ENCODE measurements at regions of chr17 and their contacts with region 1.

Region 1: DNA sequence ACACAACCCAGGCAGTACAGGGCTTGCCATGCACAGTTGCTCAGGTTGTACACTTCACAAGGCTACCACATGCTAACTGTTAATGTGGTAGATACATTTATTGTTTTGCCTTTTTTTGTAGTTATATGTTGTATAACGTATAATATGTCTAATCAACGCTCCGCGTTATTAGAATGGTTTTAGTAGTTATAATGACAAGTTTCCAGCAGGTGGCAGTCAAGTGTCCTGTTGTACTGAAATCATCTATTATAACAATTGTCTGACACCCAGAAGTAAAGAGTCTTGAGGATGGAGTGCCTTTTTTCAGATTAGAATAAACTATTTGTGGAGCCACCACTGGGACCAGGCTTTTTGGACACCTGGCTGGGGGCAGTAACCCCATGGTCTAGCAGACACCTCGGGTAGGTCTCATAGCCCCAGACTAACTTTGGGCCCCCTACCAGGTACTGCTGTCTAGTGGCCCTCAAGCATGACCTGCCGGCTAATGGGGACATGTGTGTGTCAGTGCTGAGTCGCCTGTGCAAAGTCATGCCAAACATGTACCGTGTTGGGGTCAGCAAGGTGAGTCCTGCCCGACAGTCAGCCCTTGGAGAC is 32.8 kb downstream of the MYO15A start:
- DNase-seq: peak; percentile 64 to 65
- ATAC-seq: peak; percentile 43 to 65; a peak in 4 of 6 replicates
- H3K4me3 ChIP-seq: no peak overlapping the region
- H3K27ac ChIP-seq: no peak overlapping the region
- H3K4me1 ChIP-seq: no peaks in the 10 kb centered on the region
- CTCF ChIP-seq: peak; percentile 79
- EP300 ChIP-seq: no peak
- POLR2A ChIP-seq: no peak
- RAD21 ChIP-seq: peak; percentile 48 to 63; a peak in 3 of 5 replicates

Region 2: DNA sequence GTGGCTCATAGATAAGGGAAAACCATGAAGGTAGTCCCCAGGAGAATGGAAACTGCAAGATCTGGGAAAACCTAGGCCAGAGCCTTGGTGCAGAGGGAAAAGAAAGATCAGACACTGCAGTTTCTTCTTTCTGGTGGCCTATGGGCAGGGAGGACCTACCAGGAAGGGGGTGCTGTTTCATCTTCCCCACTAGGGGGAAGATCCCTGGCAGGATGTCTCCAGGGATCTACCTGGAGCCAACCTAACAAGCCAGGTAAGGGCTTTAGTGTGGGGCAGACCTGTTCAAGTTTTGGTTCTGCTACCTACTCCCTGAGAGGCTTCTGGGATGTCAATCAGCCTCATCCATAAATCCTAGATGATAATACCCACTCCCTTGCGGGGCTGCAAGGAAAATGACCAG is 190.5 kb before region 1 on chr17:
- CTCF ChIA-PET with region 1: no interaction called
- POLR2A ChIA-PET with region 1: no interaction called
- DNase-seq: peak in 1 of 2 experiments; percentile 54
- ATAC-seq: peak in 1 of 2 experiments; percentile 80; a peak in 4 of 6 replicates
- H3K4me3 ChIP-seq: no peak overlapping the region
- H3K27ac ChIP-seq: peak overlapping the region in 1 of 2 experiments; percentile 32; a peak in 2 of 6 replicates
- H3K4me1 ChIP-seq: peaks cover 28% of the 10 kb centered on the region
- CTCF ChIP-seq: no peak
- EP300 ChIP-seq: no peak
- POLR2A ChIP-seq: no peak
- RAD21 ChIP-seq: peak in 1 of 2 experiments; percentile 18; a peak in 1 of 5 replicates

Region 3: GRCh38 chr17:18108401-18109312 is 32.6 kb before region 1 on chr17 and contains the start of gene MYO15A:
- CTCF ChIA-PET with region 1: interaction called, 11 read pairs
- POLR2A ChIA-PET with region 1: no interaction called
- DNase-seq: no peak
- ATAC-seq: peak in 1 of 2 experiments; percentile 2; a peak in 2 of 6 replicates
- H3K4me3 ChIP-seq: no peak within 1 kb of the TSS
- H3K27ac ChIP-seq: no peak within 1 kb of the TSS
- H3K4me1 ChIP-seq: no peaks in the 10 kb centered on the region
- CTCF ChIP-seq: no peak
- EP300 ChIP-seq: no peak
- POLR2A ChIP-seq: no peak
- RAD21 ChIP-seq: no peak
- polyA plus RNA-seq, gene MYO15A: 0.22 and 0.24 TPM in 2 replicates

Region 4: GRCh38 chr17:18153749-18154161 is 12.4 kb after region 1 on chr17:
- CTCF ChIA-PET with region 1: interaction called, 67 read pairs
- POLR2A ChIA-PET with region 1: no interaction called
- DNase-seq: peak in 1 of 2 experiments; percentile 40
- ATAC-seq: peak in 1 of 2 experiments; percentile 62; a peak in 3 of 6 replicates
- H3K4me3 ChIP-seq: no peak overlapping the region
- H3K27ac ChIP-seq: no peak overlapping the region
- H3K4me1 ChIP-seq: peaks cover 3% of the 10 kb centered on the region; the same call in 1 of the 3 replicates
- CTCF ChIP-seq: no peak
- EP300 ChIP-seq: no peak
- POLR2A ChIP-seq: no peak
- RAD21 ChIP-seq: no peak

Region 5: GRCh38 chr17:18183334-18184142 is 42.2 kb after region 1 on chr17 and contains the start of gene ALKBH5:
- CTCF ChIA-PET with region 1: interaction called, 40 read pairs
- POLR2A ChIA-PET with region 1: interaction called, 4 read pairs
- DNase-seq: peak; percentile 100
- ATAC-seq: peak; percentile 86 to 93
- H3K4me3 ChIP-seq: peak within 1 kb of the TSS; percentile 73
- H3K27ac ChIP-seq: peak within 1 kb of the TSS; percentile 93 to 96
- H3K4me1 ChIP-seq: peaks cover 43% of the 10 kb centered on the region
- CTCF ChIP-seq: 0 out of 3 replicates have a peak, but pooled peaks have one; percentile 11
- EP300 ChIP-seq: no peak
- POLR2A ChIP-seq: peak; percentile 72
- RAD21 ChIP-seq: no peak
- polyA plus RNA-seq, gene ALKBH5: 99.2 and 105 TPM in 2 replicates

Region 6: DNA sequence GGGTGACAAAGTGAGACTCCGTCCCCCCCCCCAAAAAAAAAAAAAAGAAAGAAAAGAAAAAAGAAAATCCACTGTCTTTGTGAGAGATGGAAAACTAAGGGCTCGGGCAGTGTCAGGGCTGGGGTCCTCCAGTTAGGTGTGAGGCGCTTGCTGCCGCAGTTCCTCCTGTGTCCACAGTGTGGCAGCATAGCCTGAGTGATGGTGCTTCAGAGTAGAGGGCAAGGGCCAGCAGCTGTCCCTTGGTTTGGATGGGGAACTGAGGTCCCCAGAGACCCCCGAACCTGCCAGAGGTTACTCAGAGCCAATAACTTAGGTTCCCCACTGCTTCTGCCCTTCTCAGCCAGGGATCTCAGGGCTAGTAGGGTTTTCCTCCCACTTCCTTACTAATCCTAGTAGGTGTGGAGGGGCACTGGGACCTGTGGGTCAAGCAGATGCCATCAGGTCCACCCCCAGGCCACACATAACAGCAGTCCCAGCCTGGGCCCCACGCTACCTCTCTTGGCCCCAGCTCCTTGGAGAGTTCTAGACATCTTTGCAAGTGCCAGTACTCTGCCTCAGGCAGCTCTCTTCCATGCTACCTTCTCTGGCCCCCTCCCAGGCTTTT is 76.2 kb after region 1 on chr17:
- CTCF ChIA-PET with region 1: interaction called, 19 read pairs
- POLR2A ChIA-PET with region 1: no interaction called
- DNase-seq: peak; percentile 71 to 97
- ATAC-seq: peak; percentile 87 to 95
- H3K4me3 ChIP-seq: no peak overlapping the region
- H3K27ac ChIP-seq: no peak overlapping the region
- H3K4me1 ChIP-seq: peaks cover 7% of the 10 kb centered on the region; the same call in 2 of the 3 replicates
- CTCF ChIP-seq: peak; percentile 85
- EP300 ChIP-seq: no peak
- POLR2A ChIP-seq: no peak
- RAD21 ChIP-seq: peak; percentile 84 to 93

Measured in A549 (cell line).